Activated CD4-positive, alpha-beta T cell treated with anti-CD3 and anti-CD28 coated beads for 36 hours (primary cell): ENCODE measurements at regions of chr16 and their contacts with region 1.

Region 1: GRCh38 chr16:67159593-67160406 is at the starts of genes FBXL8 and TRADD:
- DNase-seq: peak; percentile 88
- ATAC-seq: peak; percentile 63
- H3K4me3 Mint-ChIP-seq: peak within 1 kb of the TSS; percentile 91
- H3K27ac Mint-ChIP-seq: peak within 1 kb of the TSS; percentile 93
- H3K4me1 Mint-ChIP-seq: peaks cover 48% of the 10 kb centered on the region
- H3K27me3 Mint-ChIP-seq: peaks cover 12% of the 10 kb centered on the region
- total RNA-seq, gene FBXL8: 15.5 to 21.0 TPM
- total RNA-seq, gene TRADD: 22.0 to 34.0 TPM

Region 2: GRCh38 chr16:66954097-66954659 is 205.6 kb before region 1 on chr16:
- CTCF ChIA-PET with region 1: interaction called, 19 read pairs
- POLR2A ChIA-PET with region 1: no interaction called
- intact Hi-C with region 1: loop called in 1 of 2 experiments (anchors 1 kb)
- DNase-seq: peak; percentile 87
- ATAC-seq: peak; percentile 85
- H3K4me3 Mint-ChIP-seq: no peak overlapping the region
- H3K27ac Mint-ChIP-seq: no peak overlapping the region
- H3K4me1 Mint-ChIP-seq: peaks cover 9% of the 10 kb centered on the region
- H3K27me3 Mint-ChIP-seq: peaks cover 28% of the 10 kb centered on the region

Region 3: GRCh38 chr16:66988197-66988788 is 171.5 kb before region 1 on chr16 and contains the start of gene CES4A:
- CTCF ChIA-PET with region 1: interaction called, 22 read pairs
- POLR2A ChIA-PET with region 1: interaction called, 4 read pairs
- intact Hi-C with region 1: loop called in 1 of 2 experiments (anchors 1 kb)
- DNase-seq: peak; percentile 47
- ATAC-seq: no peak
- H3K4me3 Mint-ChIP-seq: peak within 1 kb of the TSS; percentile 1
- H3K27ac Mint-ChIP-seq: peak within 1 kb of the TSS; percentile 75
- H3K4me1 Mint-ChIP-seq: peaks cover 30% of the 10 kb centered on the region
- H3K27me3 Mint-ChIP-seq: no peaks in the 10 kb centered on the region
- total RNA-seq, gene CES4A: 13.5 to 15.7 TPM

Region 4: GRCh38 chr16:67173808-67174705 is 14.3 kb after region 1 on chr16:
- CTCF ChIA-PET with region 1: interaction called, 39 read pairs
- POLR2A ChIA-PET with region 1: interaction called, 5 read pairs
- intact Hi-C with region 1: loop called in 1 of 2 experiments (anchors 1 kb)
- DNase-seq: peak; percentile 79
- ATAC-seq: peak; percentile 50
- H3K4me3 Mint-ChIP-seq: peak overlapping the region; percentile 68
- H3K27ac Mint-ChIP-seq: peak overlapping the region; percentile 53
- H3K4me1 Mint-ChIP-seq: peaks cover 36% of the 10 kb centered on the region
- H3K27me3 Mint-ChIP-seq: peaks cover 57% of the 10 kb centered on the region

Region 5: GRCh38 chr16:67191995-67192681 is 32.3 kb after region 1 on chr16 and contains the start of gene E2F4:
- CTCF ChIA-PET with region 1: interaction called, 6 read pairs
- POLR2A ChIA-PET with region 1: no interaction called
- intact Hi-C with region 1: loop called in 1 of 2 experiments (anchors 1 kb)
- DNase-seq: peak; percentile 92
- ATAC-seq: peak; percentile 96
- H3K4me3 Mint-ChIP-seq: peak within 1 kb of the TSS; percentile 93
- H3K27ac Mint-ChIP-seq: peak within 1 kb of the TSS; percentile 93
- H3K4me1 Mint-ChIP-seq: peaks cover 32% of the 10 kb centered on the region
- H3K27me3 Mint-ChIP-seq: no peaks in the 10 kb centered on the region
- total RNA-seq, gene E2F4: 91.4 to 110 TPM